Mammary epithelial cell (primary cell): ENCODE measurements at regions of chrX and their contacts with region 1.

Region 1: GRCh38 chrX:153971450-153972367 is at the start of gene HCFC1:
- DNase-seq: peak; percentile 93
- H3K4me3 ChIP-seq: peak within 1 kb of the TSS; percentile 57 to 85 (median 72)
- H3K27ac ChIP-seq: peak within 1 kb of the TSS; percentile 97
- H3K4me1 ChIP-seq: peaks cover 19% of the 10 kb centered on the region
- H3K27me3 ChIP-seq: no peaks in the 10 kb centered on the region
- CTCF ChIP-seq: no peak
- total RNA-seq, gene HCFC1: 21.8 to 47.6 TPM

Region 2: DNA sequence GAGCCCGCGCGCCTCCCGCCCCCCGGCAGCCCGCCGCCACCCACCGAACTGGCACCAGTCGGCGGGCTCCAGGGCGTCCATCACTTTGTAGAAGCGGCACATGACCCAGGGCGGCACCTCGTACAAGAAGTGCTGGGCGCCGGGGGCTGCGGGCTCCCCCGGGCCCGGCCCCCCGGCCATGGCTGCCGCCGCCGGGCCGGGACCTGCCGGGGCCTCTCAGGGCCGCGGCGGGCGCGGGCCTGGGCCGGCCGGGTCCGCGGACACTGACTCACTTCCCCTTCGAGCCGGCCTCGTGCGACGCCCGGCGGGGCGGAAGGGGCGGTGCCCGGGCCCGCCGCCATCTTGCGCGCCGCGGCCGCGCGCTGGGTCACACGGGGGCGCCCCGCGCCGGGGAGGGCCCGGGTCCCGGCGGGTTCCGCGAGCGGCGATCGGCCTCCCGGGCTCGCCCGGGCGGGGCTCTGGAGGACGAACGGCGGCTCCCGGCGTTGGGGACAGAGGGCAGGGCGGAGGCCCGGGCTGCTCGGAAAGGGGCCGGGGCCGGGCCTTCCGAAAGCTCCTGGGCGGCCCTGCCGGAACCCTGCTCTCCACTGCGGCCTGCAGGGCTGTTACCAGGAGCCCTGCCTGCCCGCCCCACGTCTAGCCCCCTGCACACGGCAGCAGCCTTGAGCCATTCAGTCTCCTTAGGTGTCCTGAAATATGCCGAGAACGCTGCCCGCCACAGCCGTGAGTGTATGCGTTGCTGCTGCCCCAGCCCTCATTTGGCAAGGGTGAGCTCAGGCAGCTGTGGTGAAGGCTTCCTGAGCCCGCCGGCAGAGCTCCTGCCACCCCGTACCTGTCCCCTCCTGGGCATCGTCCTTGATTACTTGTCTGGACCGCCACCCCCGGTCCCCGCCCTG is 48.2 kb after region 1 on chrX and contains the start of gene IRAK1:
- CTCF ChIA-PET with region 1: no interaction called
- dilution Hi-C with region 1: no loop called
- in situ Hi-C with region 1: no loop called
- intact Hi-C with region 1: loop called (anchors 1 kb)
- DNase-seq: peak; percentile 45
- H3K4me3 ChIP-seq: peak within 1 kb of the TSS; percentile 40 to 73 (median 66)
- H3K27ac ChIP-seq: peak within 1 kb of the TSS; percentile 53
- H3K4me1 ChIP-seq: peaks cover 17% of the 10 kb centered on the region
- H3K27me3 ChIP-seq: no peaks in the 10 kb centered on the region
- CTCF ChIP-seq: no peak
- total RNA-seq, gene IRAK1: 69.0 to 129 TPM

Region 3: DNA sequence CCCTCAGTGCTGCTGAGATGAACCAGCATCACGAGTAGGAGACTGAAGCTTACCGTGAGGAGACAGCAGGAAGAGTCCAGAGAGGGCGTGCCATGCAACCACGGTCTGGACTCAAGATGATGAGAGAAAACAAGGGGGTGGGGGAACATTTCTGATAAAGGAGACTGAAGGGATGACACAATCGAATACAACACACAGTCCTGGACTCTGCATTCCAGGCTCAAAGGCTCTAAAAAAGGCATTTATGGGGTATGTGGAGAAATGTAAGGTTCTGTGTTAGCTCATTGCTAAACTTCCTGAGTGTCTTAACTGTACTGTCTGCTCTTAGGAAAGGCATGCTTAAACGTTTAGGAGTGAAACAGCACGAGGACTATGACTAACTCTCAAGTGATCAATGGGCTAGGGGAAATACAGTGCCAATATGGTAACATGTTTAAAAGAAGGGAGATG is 68.6 kb after region 1 on chrX:
- CTCF ChIA-PET with region 1: no interaction called
- dilution Hi-C with region 1: loop called (anchors 5 kb)
- in situ Hi-C with region 1: no loop called
- intact Hi-C with region 1: no loop called
- DNase-seq: peak; percentile 65
- H3K4me3 ChIP-seq: no peak overlapping the region
- H3K27ac ChIP-seq: no peak overlapping the region
- H3K4me1 ChIP-seq: peaks cover 2% of the 10 kb centered on the region
- H3K27me3 ChIP-seq: no peaks in the 10 kb centered on the region
- CTCF ChIP-seq: no peak